AG04449 (cell line): ENCODE measurements at regions of chr1 and their contacts with region 1.

Region 1: GRCh38 chr1:202998836-202999750 is 8.1 kb upstream of the TMEM183A start:
- DNase-seq: peak; percentile 5
- H3K4me3 ChIP-seq: peak overlapping the region; percentile 36
- CTCF ChIP-seq: peak; percentile 49

Region 2: DNA sequence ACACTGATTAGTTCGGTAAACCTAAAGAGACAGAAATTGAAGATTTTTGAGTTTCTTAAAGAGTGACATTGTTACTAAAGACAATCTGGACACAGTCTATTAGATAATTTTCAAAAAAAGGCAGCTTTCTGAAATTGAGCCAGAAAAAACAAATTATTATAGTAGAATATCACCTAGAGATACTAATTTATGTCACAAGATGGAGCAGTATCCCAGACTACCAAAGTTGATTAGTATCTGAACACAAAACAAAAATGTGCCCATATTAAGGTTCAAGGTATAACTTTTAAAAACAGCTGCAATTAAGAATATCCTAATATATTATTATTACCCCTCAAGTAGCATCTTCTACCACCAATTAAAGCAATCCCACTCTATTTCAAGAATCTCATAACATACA is 248.3 kb before region 1 on chr1:
- CTCF ChIA-PET with region 1: interaction called, 14 read pairs
- POLR2A ChIA-PET with region 1: no interaction called
- DNase-seq: no peak
- H3K4me3 ChIP-seq: no peak overlapping the region
- CTCF ChIP-seq: no peak

Region 3: GRCh38 chr1:202952818-202953217 is 46.3 kb before region 1 on chr1:
- CTCF ChIA-PET with region 1: interaction called, 10 read pairs
- POLR2A ChIA-PET with region 1: no interaction called
- DNase-seq: no peak
- H3K4me3 ChIP-seq: no peak overlapping the region
- CTCF ChIP-seq: no peak

Region 4: DNA sequence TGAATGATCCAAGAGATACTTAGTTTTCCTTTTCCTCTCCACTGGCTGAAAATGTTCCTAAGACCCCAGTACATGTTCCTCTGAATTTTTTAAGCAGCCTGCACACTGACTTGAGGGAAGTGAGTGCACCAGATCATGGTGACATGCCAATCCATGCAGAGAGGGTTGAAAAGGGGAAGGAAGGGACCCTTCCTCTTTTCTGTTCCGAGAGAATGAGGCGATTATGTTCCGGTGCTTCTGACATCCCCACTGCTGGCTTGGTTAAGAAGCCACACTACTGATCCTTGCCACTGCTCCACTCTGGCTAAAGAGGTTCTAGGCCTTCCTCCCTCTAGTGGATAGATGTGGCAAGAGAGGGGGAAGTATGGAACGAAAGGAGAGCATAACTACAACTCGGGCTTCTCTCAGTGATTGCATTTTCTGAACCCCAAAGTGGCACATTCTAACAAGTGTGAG is 30.2 kb before region 1 on chr1:
- CTCF ChIA-PET with region 1: interaction called, 42 read pairs
- POLR2A ChIA-PET with region 1: no interaction called
- DNase-seq: no peak
- H3K4me3 ChIP-seq: no peak overlapping the region
- CTCF ChIP-seq: peak; percentile 71

Region 5: DNA sequence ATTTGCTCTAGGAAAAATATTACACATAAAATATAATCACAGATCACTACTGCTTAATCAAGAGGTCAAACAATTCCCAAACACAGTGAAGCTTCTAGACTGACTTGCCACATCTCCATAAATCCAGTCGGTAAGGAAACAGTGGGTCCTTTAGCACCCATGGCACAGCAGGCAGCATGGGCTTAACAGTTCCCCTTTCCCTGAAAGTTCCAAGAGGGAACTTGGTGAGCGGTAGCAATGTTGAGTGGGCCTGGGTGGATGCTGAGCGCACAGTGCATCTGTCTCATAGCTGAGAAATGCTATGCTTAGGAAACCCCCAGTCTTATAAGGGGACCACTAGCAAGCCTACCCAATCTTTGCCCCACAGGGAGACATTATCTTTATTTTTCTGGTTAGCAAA is 24.2 kb before region 1 on chr1:
- CTCF ChIA-PET with region 1: interaction called, 42 read pairs
- POLR2A ChIA-PET with region 1: no interaction called
- DNase-seq: no peak
- H3K4me3 ChIP-seq: no peak overlapping the region
- CTCF ChIP-seq: no peak

Region 6: GRCh38 chr1:202987922-202988583 is 11.0 kb before region 1 on chr1:
- CTCF ChIA-PET with region 1: interaction called, 53 read pairs
- POLR2A ChIA-PET with region 1: no interaction called
- DNase-seq: no peak
- H3K4me3 ChIP-seq: no peak overlapping the region
- CTCF ChIP-seq: no peak